GM18951 (cell line): ENCODE measurements at regions of chr6 and their contacts with region 1.

Region 1: GRCh38 chr6:44237813-44238433 is 9.0 kb upstream of the HSP90AB1 start:
- POLR2A ChIP-seq: peak; percentile 55

Region 2: GRCh38 chr6:44052419-44053023 is 185.4 kb before region 1 on chr6:
- in situ Hi-C with region 1: no loop called
- POLR2A ChIP-seq: no peak

Region 3: GRCh38 chr6:44172731-44173500 is 65.0 kb before region 1 on chr6:
- in situ Hi-C with region 1: loop called (anchors 5 kb)
- POLR2A ChIP-seq: no peak